ENCODE measurements at regions of chr5 and their contacts with region 1.

Region 1: DNA sequence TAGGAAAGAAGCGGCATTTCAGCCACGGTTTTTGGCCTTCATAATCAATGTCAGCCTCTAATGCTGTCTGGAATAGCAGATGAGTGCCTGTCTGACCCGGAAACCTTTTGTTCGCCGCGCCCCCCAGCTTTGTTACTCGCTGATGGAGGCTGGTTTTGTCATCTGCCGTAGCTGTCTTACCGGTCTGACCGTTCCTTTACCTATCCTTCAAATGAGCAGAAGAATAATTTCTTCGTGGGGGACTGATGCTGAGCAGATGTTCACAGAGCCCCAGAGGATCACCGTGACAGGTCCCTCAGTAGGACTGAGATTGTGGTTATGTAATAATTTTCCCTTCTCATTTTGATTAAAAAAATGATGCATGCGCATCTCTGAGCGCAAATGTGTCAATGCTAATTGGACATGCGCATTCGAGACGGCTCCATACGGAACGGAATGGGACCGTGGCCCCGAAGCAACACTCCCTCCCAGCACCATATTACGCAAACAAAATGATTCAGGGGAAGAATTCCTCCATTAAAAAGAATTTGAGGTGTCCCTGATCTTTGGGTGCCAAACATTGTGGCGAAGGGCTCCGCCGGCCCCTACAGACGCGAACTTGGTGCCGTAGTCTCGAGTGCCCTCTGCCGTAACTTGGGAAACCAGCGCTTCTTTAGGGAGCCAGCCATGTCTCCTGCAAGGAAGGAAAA is 27.6 kb downstream of the TLX3 start:
- DNase-seq: no peak
- ATAC-seq: peak; percentile 71
- H3K4me3 ChIP-seq: peak overlapping the region in 1 of 2 donors; percentile 29
- H3K27ac ChIP-seq: no peak overlapping the region
- H3K4me1 ChIP-seq: no peaks in the 10 kb centered on the region
- H3K27me3 ChIP-seq: no peaks in the 10 kb centered on the region

Region 2: GRCh38 chr5:170745481-170746071 is 591.1 kb before region 1 on chr5:
- intact Hi-C with region 1: loop called in 1 of 2 experiments (anchors 5 kb)
- DNase-seq: no peak
- ATAC-seq: peak; percentile 45
- H3K4me3 ChIP-seq: no peak overlapping the region
- H3K27ac ChIP-seq: no peak overlapping the region
- H3K4me1 ChIP-seq: no peaks in the 10 kb centered on the region
- H3K27me3 ChIP-seq: no peaks in the 10 kb centered on the region

Region 3: DNA sequence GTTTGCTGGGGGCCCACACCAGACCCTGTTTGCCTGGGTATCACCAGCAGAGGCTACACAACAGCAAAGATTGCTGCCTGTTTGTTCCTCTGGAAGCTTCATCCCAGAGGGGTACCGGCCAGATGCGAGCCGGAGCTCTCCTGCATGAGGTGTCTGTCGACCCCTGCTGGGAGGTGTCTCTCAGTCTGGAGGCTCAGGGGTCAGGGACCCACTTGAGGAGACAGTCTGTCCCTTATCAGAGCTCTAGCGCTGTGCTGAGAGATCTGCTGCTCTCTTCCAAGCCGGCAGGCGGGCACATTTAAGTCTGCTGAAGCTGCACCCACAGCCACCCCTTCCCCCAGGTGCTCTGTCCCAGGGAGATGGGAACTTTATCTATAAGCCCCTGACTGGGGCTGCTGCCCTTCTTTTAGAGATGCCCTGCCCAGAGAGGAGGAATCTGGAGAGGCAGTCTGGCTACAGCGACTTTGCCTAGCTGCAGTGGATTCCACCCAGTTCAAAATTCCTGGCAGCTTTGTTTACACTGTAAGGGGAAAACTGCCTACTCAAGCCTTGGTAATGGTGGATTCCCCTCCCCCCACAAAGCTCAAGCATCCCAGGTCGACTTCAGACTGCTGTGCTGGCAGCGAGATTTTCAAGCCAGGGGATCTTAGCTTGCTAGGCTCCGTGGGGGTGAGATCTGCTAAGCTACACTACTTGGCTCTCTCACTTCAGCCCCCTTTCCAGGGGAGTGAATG is 233.6 kb before region 1 on chr5:
- intact Hi-C with region 1: no loop called
- DNase-seq: no peak
- ATAC-seq: no peak
- H3K4me3 ChIP-seq: no peak overlapping the region
- H3K27ac ChIP-seq: no peak overlapping the region
- H3K4me1 ChIP-seq: no peaks in the 10 kb centered on the region
- H3K27me3 ChIP-seq: no peaks in the 10 kb centered on the region

Region 4: DNA sequence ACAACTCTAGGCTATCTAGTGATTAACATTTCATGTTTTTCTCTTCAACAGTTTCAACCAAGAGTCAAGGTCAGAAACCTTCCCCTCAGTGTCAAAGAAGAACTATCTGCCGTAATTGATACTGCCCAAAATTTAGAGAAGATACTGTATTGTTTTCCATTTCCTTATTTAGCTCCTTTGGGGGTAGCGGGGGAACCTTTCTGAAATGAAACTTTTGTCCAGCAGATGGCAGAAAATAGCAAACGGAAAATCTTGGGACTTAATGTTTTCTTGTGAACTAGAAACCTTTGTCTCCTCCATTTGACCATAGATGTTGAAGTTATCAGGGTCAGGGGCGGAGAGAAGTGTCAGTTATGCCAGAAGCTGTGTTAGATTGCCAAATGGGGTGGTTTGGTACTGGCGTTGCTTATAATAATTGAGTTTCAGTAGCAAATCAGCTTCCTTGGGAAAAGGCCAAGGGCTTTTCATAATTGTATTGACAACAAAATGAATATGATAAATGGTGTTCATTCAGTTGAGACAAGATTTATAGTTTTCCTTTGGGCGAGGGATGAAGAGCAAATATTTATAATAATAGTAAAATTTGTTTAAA is 129.3 kb before region 1 on chr5:
- intact Hi-C with region 1: loop called (anchors 2 to 5 kb)
- DNase-seq: no peak
- ATAC-seq: no peak
- H3K4me3 ChIP-seq: no peak overlapping the region
- H3K27ac ChIP-seq: no peak overlapping the region
- H3K4me1 ChIP-seq: no peaks in the 10 kb centered on the region
- H3K27me3 ChIP-seq: no peaks in the 10 kb centered on the region

Measured in aorta (tissue), 5 donors.